ENCODE measurements at regions of chrX and their contacts with region 1.

Region 1: DNA sequence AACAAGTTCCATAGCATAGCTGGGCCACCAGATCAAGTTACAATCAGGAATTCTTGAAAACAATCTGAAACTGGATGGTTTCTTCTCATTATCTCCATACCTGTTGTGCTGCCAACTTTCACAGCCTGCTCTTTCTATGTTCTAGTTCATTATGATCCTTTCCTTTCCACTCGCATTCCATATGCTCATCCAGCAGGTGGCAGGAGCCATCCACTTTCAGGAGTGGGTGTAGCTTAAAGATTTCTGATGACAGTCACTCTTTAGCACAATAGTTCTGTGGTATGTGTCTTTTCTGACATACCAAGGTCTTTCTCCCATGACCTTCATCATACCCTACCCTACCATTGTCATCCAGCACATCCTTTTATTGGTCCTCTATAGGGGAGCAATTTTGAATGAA is 46.4 kb downstream of the PAGE2 start:
- DNase-seq: peak; percentile 39
- ATAC-seq: peak; percentile 69
- H3K4me3 ChIP-seq: no peak overlapping the region
- H3K27ac ChIP-seq: no peak overlapping the region
- H3K4me1 ChIP-seq: no peaks in the 10 kb centered on the region; the same call in 1 of the 2 replicates
- H3K27me3 ChIP-seq: no peaks in the 10 kb centered on the region
- CTCF ChIP-seq: peak; percentile 82
- EP300 ChIP-seq: no peak
- POLR2A ChIP-seq: no peak
- RAD21 ChIP-seq: peak; percentile 63

Region 2: DNA sequence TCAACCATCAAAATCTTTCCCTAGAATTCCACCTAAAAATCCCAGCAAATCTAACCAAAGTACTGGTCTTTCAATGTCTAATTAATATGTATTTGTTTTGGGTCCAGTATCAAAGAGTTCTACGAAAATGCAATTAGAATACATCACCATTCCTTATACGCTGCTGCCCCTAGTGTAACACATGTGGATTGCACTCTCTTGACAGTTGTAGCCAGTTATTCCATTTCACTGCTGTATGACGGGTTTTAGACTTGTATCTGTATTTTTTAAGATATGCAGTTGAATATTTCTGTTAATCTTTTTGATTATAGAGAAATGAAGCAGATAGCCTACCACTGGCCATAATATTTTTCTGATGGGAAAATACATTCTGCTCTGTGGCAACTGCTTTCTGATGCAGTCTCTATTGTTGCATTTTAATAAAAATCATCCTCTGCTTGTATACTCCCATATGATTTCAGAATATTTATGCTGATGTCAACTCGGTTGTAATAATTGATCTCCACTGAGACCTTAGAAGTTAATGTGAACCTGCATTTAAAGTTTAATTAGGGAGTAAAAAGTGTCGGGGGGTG is 77.4 kb before region 1 on chrX:
- CTCF ChIA-PET with region 1: no interaction called
- POLR2A ChIA-PET with region 1: no interaction called
- in situ Hi-C with region 1: no loop called
- intact Hi-C with region 1: no loop called
- DNase-seq: peak; percentile 7
- ATAC-seq: no peak
- H3K4me3 ChIP-seq: no peak overlapping the region
- H3K27ac ChIP-seq: no peak overlapping the region
- H3K4me1 ChIP-seq: no peaks in the 10 kb centered on the region
- H3K27me3 ChIP-seq: no peaks in the 10 kb centered on the region
- CTCF ChIP-seq: peak; percentile 63
- EP300 ChIP-seq: no peak
- POLR2A ChIP-seq: no peak
- RAD21 ChIP-seq: peak; percentile 66

Region 3: DNA sequence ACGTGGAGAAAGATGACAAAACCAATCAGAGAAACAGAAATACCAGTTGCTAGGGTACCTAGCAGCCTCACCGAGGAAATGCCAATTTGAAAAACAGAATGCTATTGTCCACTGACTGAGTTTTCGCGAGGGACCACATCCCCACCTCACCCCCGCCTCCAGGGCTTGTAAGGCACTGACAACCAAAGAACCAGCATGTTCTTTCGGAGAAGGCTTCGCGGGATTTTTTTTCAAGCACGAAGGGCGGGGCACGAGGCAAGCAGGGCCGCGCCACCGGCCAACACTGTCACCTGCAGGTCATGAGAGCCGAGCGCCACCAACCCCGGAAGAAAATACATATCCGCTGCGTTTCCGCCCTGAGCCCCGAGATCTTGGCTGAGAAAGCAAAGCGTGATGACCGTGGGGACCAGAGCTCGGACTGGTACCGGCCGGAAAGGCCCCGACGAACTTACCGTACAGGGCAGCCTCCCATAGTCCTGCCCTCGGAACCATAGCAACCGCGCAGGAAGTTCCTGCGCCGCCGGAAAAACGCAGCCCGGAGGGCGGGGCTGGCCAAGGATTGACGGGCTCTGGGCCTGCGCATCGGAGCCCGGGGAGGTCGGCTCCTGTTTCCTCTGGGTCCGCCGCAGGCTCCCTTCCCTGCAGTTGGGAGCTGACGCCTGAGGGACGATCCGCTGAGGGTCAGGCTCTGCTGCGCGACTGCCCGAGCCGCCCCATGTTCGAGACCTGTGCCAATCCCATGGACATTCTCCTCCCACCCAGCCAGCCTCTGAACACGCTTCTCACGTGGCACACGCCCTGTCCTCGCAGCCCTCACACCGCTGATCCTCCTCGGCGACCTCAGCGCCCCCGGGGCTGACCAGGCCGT is 25.7 kb after region 1 on chrX:
- CTCF ChIA-PET with region 1: no interaction called
- POLR2A ChIA-PET with region 1: no interaction called
- in situ Hi-C with region 1: no loop called
- intact Hi-C with region 1: loop called (anchors 1 kb)
- DNase-seq: peak; percentile 76
- ATAC-seq: peak; percentile 98
- H3K4me3 ChIP-seq: peak overlapping the region; percentile 64 to 78 (median 68)
- H3K27ac ChIP-seq: peak overlapping the region; percentile 82
- H3K4me1 ChIP-seq: 0 out of 2 replicates have a peak, but pooled peaks cover 11% of the 10 kb centered on the region
- H3K27me3 ChIP-seq: no peaks in the 10 kb centered on the region
- CTCF ChIP-seq: peak; percentile 80
- EP300 ChIP-seq: no peak; a peak in 1 of 4 replicates
- POLR2A ChIP-seq: peak; percentile 57 to 87
- RAD21 ChIP-seq: peak; percentile 81

Region 4: DNA sequence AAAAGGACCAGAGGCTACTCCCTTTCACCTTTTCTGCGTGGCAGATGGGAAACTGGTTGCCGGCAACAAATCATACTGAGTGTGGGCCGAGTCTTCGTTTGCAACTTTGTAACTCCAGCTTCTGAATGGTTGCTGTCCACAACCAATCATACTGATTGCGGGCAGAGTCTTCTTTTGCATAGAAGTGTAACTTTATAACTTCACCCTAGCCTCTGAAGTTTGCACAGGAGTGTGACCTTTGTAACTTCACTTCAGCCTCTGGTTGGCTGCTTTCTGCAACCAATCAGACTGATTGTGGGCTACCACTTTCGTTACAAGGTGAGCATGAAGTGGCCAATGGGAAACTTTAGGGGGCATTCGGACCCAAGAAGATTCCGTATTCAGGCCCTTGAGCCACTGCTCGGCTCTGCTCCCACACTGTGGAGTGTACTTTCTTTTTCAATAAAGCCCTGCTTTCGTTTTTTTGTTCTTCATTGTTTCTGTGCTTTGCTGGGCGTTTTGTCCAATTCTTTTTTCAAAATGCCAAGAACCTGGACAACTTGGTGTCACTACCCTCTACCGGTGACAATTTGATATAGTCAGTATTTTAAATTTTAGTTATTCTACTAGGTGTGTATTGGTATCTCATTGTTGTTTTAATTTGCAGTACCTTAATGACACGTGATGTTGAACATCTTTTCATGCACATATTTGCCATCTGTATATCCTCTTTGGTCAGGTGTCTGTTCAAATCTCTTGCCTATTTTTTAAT is 75.9 kb after region 1 on chrX:
- CTCF ChIA-PET with region 1: interaction called, 6 read pairs
- POLR2A ChIA-PET with region 1: no interaction called
- in situ Hi-C with region 1: no loop called
- intact Hi-C with region 1: loop called (anchors 1 kb)
- DNase-seq: peak; percentile 41
- ATAC-seq: peak; percentile 93
- H3K4me3 ChIP-seq: peak overlapping the region in 2 of 3 experiments; percentile 29 to 34; a peak in 4 of 6 replicates
- H3K27ac ChIP-seq: no peak overlapping the region
- H3K4me1 ChIP-seq: no peaks in the 10 kb centered on the region
- H3K27me3 ChIP-seq: no peaks in the 10 kb centered on the region
- CTCF ChIP-seq: peak; percentile 18; the same call in 1 of the 2 replicates
- EP300 ChIP-seq: no peak
- POLR2A ChIP-seq: no peak
- RAD21 ChIP-seq: no peak

Region 5: DNA sequence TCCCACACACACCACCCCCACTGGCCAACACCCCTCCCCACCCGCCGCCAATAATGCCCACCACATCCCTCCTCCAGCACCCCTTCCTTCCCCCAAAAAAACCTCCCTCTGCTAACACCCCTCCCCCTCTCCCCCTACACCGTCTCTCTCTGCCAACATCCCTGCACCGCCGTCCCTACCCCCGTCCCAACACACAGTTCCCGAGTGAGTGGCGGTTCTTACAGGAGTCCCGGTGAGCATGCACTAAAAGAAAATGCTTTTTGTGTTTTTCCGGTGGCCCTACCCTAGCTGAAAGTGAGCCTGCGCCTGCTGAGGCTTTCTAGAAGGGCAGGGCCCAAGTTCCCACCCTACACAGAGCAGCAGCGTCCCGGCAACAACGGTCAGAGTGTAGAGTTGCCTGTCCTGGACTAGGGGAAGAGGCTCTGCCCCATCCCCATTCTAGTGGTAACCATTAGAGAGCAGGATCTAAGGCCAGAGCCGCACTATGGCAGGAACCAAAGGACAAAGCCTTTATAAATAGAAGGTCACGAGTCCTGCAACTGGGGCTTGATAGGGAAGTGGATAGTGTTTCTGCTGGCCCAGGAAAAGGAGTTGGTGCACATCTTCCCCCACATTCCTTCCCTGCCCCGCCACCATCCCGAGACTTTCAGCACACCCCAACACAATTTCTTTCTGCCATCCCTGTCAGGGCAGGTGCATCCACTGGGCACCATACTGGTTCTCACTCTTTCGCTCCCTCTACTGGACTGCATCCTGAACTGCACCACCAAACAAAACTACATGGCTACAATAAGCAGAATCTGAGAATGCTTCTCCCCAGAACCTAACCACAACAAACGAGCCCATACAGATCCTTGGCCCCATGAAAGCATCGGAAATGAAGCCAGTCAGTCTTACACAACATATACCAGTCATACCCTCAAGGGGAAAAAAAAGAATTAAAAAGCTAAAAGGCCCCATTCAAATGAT is 207.6 kb after region 1 on chrX:
- CTCF ChIA-PET with region 1: interaction called, 4 read pairs
- POLR2A ChIA-PET with region 1: no interaction called
- in situ Hi-C with region 1: loop called (anchors 10 kb)
- intact Hi-C with region 1: loop called (anchors 1 kb)
- DNase-seq: peak; percentile 3
- ATAC-seq: peak; percentile 69
- H3K4me3 ChIP-seq: no peak overlapping the region
- H3K27ac ChIP-seq: no peak overlapping the region
- H3K4me1 ChIP-seq: no peaks in the 10 kb centered on the region
- H3K27me3 ChIP-seq: no peaks in the 10 kb centered on the region
- CTCF ChIP-seq: peak; percentile 59
- EP300 ChIP-seq: no peak
- POLR2A ChIP-seq: no peak
- RAD21 ChIP-seq: no peak

Region 6: DNA sequence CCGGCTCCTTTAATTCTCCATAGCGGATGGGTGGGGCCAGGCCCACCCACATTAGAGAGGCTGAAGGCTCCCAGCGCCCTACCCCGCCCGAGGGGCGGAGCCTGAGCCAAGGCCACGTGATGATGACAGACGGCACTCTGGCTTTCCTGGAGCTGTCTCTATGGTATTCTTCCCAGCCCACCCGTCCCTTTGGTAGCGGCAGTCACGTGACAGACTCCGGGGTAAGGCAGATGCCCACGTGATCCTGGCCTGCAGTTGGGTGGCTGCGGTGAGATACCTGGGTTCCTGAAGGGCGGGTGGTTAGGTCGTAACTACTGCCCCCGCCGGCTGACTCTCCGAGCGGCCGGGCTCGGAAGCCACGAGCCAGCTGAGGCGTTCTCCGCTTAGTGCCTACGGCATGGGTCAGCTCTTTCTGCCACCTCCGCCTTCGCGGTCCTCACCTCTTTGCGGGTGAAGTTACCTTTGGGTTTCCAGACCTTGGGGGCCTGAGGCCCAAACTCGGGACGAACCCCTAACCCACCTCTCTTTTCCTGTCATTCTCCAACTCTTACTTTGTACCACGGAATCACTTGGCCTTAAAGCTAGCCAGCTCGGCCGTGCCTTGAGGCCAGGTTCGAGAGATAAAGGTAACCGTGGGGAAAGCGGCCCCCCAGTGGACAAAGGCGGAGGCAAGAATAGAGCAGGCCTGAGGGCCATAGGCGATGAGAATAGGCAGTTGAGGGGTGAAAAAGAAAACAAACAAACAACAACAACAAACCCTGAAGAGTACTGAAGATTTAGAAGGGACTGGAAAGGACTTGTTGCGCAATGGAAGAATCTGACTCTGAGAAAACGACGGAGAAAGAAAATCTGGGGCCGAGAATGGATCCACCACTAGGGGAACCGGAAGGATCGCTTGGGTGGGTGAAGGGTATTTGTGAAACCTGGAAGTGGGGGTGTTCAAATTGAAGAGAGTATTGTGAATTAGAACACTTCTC is 582.6 kb after region 1 on chrX and contains the start of gene RRAGB:
- CTCF ChIA-PET with region 1: no interaction called
- POLR2A ChIA-PET with region 1: no interaction called
- in situ Hi-C with region 1: loop called (anchors 25 kb)
- intact Hi-C with region 1: no loop called
- DNase-seq: peak; percentile 92
- ATAC-seq: peak; percentile 98
- H3K4me3 ChIP-seq: peak within 1 kb of the TSS; percentile 61 to 80 (median 74)
- H3K27ac ChIP-seq: peak within 1 kb of the TSS; percentile 79
- H3K4me1 ChIP-seq: peaks cover 12% of the 10 kb centered on the region
- H3K27me3 ChIP-seq: no peaks in the 10 kb centered on the region
- CTCF ChIP-seq: peak; percentile 63
- EP300 ChIP-seq: no peak
- POLR2A ChIP-seq: peak; percentile 70 to 76
- RAD21 ChIP-seq: no peak; the same call in 1 of the 2 replicates
- total RNA-seq, gene RRAGB: 11.2 and 12.2 TPM in 2 replicates

Measured in HepG2 (cell line).